Prostate gland (tissue), 2 donors: ENCODE measurements at regions of chr3 and their contacts with region 1.

Region 1: GRCh38 chr3:49839193-49839809 is 17.1 kb downstream of the TRAIP start:
- DNase-seq: peak; percentile 72
- H3K4me3 ChIP-seq: no peak overlapping the region
- H3K27ac ChIP-seq: no peak overlapping the region
- H3K4me1 ChIP-seq: no peaks in the 10 kb centered on the region
- H3K27me3 ChIP-seq: no peaks in the 10 kb centered on the region
- CTCF ChIP-seq: peak; percentile 71 to 95 (median 87)
- POLR2A ChIP-seq: no peak

Region 2: DNA sequence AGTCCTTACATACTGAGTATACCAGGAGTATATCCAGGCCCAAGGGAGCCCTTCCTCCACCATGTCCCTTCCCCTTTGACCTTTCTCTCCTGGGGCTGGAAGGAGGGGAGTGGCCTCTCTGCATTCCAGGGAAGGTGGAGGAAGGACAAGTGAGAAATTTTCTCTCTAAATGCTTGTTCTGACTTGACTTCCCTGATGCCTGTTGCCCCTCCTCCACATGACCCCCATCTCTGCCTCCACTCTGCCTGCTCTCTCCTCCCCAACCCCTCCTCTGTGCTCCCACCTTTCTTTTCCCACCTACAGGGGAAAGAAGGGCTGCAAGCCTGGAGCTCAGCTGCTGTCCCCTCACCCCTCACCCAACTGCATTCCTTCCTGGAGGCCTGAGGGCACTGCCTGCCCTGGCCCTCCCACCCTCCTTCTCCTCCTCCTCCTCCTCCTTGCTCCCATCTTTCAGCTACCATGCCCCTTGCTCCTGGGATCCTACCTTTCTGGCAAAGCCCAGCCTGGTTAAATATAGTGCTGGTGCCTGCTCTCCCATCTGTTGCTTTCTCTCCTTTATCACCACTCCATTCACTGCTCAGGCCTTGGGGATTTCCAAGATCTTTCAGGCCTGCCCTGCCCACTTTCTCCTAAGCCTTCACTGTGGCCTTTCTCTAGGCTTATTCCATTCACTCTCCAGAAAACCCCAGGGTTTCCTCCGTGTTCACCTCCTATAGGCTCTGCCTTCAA is 377.7 kb before region 1 on chr3:
- intact Hi-C with region 1: no loop called
- DNase-seq: no peak
- H3K4me3 ChIP-seq: no peak overlapping the region
- H3K27ac ChIP-seq: no peak overlapping the region
- H3K4me1 ChIP-seq: no peaks in the 10 kb centered on the region
- H3K27me3 ChIP-seq: no peaks in the 10 kb centered on the region
- CTCF ChIP-seq: no peak
- POLR2A ChIP-seq: no peak

Region 3: DNA sequence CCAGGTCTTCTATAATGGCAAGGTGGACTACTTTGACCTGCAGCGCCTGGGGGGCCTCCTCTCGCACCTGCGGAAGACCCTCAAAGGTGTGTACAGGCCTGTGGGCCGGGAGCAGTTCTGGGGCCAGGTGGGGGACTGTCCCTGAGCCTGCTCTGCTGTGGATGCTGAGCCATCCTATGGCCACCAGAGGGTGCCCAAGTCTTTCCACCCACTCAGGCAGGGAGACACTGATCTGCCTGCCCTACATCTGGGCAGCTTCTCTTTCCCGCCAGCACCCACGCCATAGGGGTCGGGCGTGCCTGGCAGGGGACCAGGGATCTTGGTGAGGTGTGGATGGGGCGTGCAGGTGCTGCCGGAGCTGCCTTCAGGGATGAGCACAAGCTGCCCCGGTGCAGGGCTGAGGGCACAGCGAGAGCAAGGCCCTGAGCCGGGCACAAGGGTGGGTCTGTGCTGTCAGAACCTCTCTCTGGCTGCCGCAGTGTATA is 135.8 kb before region 1 on chr3:
- intact Hi-C with region 1: loop called (anchors 5 kb)
- DNase-seq: no peak
- H3K4me3 ChIP-seq: no peak overlapping the region
- H3K27ac ChIP-seq: no peak overlapping the region
- H3K4me1 ChIP-seq: no peaks in the 10 kb centered on the region
- H3K27me3 ChIP-seq: no peaks in the 10 kb centered on the region
- CTCF ChIP-seq: peak; percentile 52 to 88 (median 67)
- POLR2A ChIP-seq: no peak

Region 4: GRCh38 chr3:49802719-49803464 is 36.4 kb before region 1 on chr3 and contains the start of gene INKA1:
- intact Hi-C with region 1: loop called (anchors 1 kb)
- DNase-seq: peak; percentile 89
- H3K4me3 ChIP-seq: peak within 1 kb of the TSS; percentile 50 to 70
- H3K27ac ChIP-seq: peak within 1 kb of the TSS; percentile 85 to 89
- H3K4me1 ChIP-seq: peaks cover 21% of the 10 kb centered on the region
- H3K27me3 ChIP-seq: no peaks in the 10 kb centered on the region
- CTCF ChIP-seq: peak; percentile 73 to 96 (median 92)
- POLR2A ChIP-seq: peak; percentile 82
- total RNA-seq, gene INKA1: 4.0 to 8.1 TPM